Naive thymus-derived CD4-positive, alpha-beta T cell (primary cell): ENCODE measurements at regions of chr1 and their contacts with region 1.

Region 1: DNA sequence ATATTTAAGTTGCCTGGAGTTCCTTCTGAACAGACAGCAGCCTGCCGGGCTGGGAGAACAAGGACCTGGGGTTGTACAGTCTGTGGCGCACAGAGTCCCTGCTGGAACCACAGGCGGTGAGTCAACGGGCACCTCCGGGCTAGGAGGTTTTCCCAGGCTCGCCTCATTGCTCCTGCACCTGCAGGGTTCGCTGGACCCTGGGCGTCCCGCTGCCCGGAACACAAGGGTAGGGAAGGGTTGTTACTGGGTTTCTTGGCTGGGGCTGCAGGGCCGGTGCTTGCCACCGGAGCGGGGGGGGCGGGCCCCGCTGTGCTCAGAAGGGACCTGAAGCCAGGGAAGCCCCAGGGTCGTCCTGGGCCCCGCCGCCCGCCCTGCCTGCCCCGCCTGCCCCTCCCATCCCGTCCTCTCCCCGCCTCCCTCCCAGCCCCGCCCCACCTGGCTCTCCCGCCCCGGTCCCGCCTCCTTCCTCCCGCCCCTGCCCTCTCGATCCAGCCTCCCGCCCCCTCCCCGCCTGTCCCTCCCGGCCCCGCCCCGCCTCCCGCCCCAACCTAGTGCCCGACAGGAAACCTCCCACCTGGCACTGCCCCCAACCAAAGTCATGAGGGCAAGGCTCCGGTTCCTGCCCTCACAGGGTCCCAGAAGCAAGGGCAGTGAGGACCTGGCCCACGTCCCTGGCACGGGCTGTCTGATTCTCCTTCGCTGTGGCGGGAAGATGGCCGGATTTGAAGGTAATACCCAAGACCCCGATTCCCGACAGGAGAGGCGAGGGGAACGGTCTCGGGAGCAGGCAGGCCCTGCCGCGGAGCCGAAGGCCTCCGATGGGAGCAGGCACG is 6.8 kb downstream of the JMJD4 start:
- DNase-seq: peak in 7 of 9 donors; percentile 23 to 63 (median 39)
- ATAC-seq: peak; percentile 69
- H3K4me3 ChIP-seq: peak overlapping the region; percentile 59
- H3K4me3 Mint-ChIP-seq: peak overlapping the region; percentile 78 to 89 (median 87)
- H3K27ac ChIP-seq: peak overlapping the region; percentile 69
- H3K27ac Mint-ChIP-seq: peak overlapping the region; percentile 43 to 90 (median 74)
- H3K4me1 ChIP-seq: peaks cover 0 to 10% of the 10 kb centered on the region in 2 donors
- H3K4me1 Mint-ChIP-seq: peaks cover 6 to 29% (median 20%) of the 10 kb centered on the region in 7 donors
- H3K27me3 ChIP-seq: no peaks in the 10 kb centered on the region
- H3K27me3 Mint-ChIP-seq: peaks cover 0 to 11% (median 8%) of the 10 kb centered on the region in 5 donors

Region 2: DNA sequence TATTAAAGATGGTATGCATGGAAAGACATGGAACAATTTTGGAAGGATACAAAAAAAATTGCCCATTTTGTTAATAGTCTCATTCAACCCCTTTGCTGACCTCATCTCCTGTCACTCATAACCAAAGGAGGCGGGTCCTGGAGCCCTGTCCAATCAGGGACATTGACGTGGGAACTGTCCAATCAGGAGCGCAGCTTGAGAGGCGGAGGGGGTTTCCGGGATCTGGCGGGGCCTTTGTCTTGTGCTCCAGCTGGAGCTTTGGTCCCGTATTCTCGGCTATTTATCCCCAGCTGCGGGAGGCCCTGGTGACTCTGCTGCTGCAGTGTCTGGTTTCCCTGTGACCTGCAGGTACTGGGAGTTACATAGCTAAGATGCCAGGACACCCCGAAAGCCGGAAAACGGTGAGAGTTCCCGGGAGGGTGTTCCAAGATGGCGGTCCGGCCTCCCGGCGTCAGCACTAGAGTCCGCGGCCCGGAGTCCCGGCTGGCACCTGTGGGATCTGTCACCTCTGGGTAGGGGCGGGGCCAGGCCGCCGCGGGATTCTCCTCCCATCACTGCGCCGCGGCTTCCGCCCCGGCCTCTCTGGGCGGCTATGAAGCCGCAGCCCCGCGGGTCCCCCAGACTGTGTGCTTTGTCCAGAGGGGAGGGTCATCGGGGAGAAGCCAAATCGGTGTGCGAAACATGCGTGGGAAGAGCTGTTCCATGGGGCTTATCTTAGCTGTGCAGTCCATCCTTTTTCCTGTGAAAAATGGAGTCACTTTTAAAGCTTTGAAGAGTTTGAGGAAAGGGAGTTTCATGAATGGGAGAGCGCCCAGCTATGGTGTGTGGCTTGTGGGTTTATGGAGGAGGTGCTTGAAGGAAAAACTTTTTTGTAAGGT is 164.7 kb before region 1 on chr1 and contains the start of gene ZNF678:
- CTCF ChIA-PET with region 1: no interaction called
- POLR2A ChIA-PET with region 1: no interaction called
- intact Hi-C with region 1: loop called in 1 of 2 experiments (anchors 5 kb)
- DNase-seq: peak; percentile 58 to 86 (median 84)
- ATAC-seq: peak; percentile 95
- H3K4me3 ChIP-seq: peak within 1 kb of the TSS; percentile 88
- H3K4me3 Mint-ChIP-seq: peak within 1 kb of the TSS; percentile 87 to 97 (median 94)
- H3K27ac ChIP-seq: peak within 1 kb of the TSS; percentile 82
- H3K27ac Mint-ChIP-seq: peak within 1 kb of the TSS; percentile 71 to 95 (median 91)
- H3K4me1 ChIP-seq: peaks cover 4 to 5% of the 10 kb centered on the region in 2 donors
- H3K4me1 Mint-ChIP-seq: peaks cover 17 to 57% (median 40%) of the 10 kb centered on the region in 7 donors
- H3K27me3 ChIP-seq: no peaks in the 10 kb centered on the region
- H3K27me3 Mint-ChIP-seq: peaks cover 22 to 27% (median 27%) of the 10 kb centered on the region in 5 donors
- total RNA-seq, gene ZNF678: 3.2 to 8.3 (median 7.4) TPM

Region 3: GRCh38 chr1:227697321-227697864 is 30.9 kb before region 1 on chr1:
- CTCF ChIA-PET with region 1: no interaction called
- POLR2A ChIA-PET with region 1: no interaction called
- intact Hi-C with region 1: no loop called
- DNase-seq: no peak
- ATAC-seq: no peak
- H3K4me3 ChIP-seq: no peak overlapping the region
- H3K4me3 Mint-ChIP-seq: no peak overlapping the region
- H3K27ac ChIP-seq: no peak overlapping the region
- H3K27ac Mint-ChIP-seq: no peak overlapping the region
- H3K4me1 ChIP-seq: no peaks in the 10 kb centered on the region
- H3K4me1 Mint-ChIP-seq: no peaks in the 10 kb centered on the region
- H3K27me3 ChIP-seq: no peaks in the 10 kb centered on the region
- H3K27me3 Mint-ChIP-seq: peaks cover 0 to 52% (median 19%) of the 10 kb centered on the region in 5 donors

Region 4: GRCh38 chr1:227946624-227947385 is 218.5 kb after region 1 on chr1:
- CTCF ChIA-PET with region 1: no interaction called
- POLR2A ChIA-PET with region 1: no interaction called
- intact Hi-C with region 1: loop called in 1 of 2 experiments (anchors 2 kb)
- DNase-seq: peak in 8 of 9 donors; percentile 24 to 70 (median 60)
- ATAC-seq: peak; percentile 63
- H3K4me3 ChIP-seq: peak overlapping the region; percentile 17
- H3K4me3 Mint-ChIP-seq: peak overlapping the region; percentile 65 to 87 (median 74)
- H3K27ac ChIP-seq: no peak overlapping the region
- H3K27ac Mint-ChIP-seq: peak overlapping the region in 1 of 9 donors; percentile 23
- H3K4me1 ChIP-seq: peaks cover 0 to 7% of the 10 kb centered on the region in 2 donors
- H3K4me1 Mint-ChIP-seq: peaks cover 5 to 12% (median 8%) of the 10 kb centered on the region in 7 donors
- H3K27me3 ChIP-seq: no peaks in the 10 kb centered on the region
- H3K27me3 Mint-ChIP-seq: peaks cover 8 to 34% (median 13%) of the 10 kb centered on the region in 5 donors